Activated CD8-positive, alpha-beta T cell treated with anti-CD3 and anti-CD28 coated beads for 36 hours (primary cell): ENCODE measurements at regions of chr11 and their contacts with region 1.

Region 1: GRCh38 chr11:85699957-85700741 is 14.2 kb upstream of the CCDC89 start:
- DNase-seq: no peak
- ATAC-seq: peak; percentile 67
- H3K4me3 Mint-ChIP-seq: peak overlapping the region; percentile 36
- H3K27ac Mint-ChIP-seq: peak overlapping the region; percentile 81
- H3K4me1 Mint-ChIP-seq: peaks cover 28% of the 10 kb centered on the region
- H3K27me3 Mint-ChIP-seq: no peaks in the 10 kb centered on the region
- CTCF ChIP-seq: no peak

Region 2: GRCh38 chr11:85752890-85753581 is 52.9 kb after region 1 on chr11:
- CTCF ChIA-PET with region 1: no interaction called
- POLR2A ChIA-PET with region 1: interaction called, 3 read pairs
- intact Hi-C with region 1: loop called (anchors 5 kb)
- DNase-seq: peak; percentile 97
- ATAC-seq: peak; percentile 85
- H3K4me3 Mint-ChIP-seq: peak overlapping the region; percentile 66
- H3K27ac Mint-ChIP-seq: peak overlapping the region; percentile 97
- H3K4me1 Mint-ChIP-seq: peaks cover 92% of the 10 kb centered on the region
- H3K27me3 Mint-ChIP-seq: no peaks in the 10 kb centered on the region
- CTCF ChIP-seq: no peak

Region 3: DNA sequence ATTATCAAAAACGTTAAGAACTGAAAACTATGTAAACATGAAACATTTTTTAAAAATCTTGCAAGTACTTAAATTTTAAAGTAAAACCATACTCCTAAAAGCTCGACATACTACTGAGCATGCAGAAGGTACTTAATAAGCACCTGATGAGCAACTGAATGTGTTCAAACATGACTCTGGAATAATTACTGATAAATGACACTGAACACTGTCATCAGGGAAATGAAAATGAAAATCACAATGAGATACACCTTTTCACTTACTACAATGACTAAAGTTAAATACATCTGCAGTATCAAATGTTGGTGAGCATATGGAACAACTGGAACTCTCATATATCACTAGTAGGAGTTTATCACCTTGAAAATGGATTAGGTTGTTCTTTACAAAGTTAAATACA is 303.5 kb after region 1 on chr11:
- CTCF ChIA-PET with region 1: no interaction called
- POLR2A ChIA-PET with region 1: no interaction called
- intact Hi-C with region 1: no loop called
- DNase-seq: no peak
- ATAC-seq: no peak
- H3K4me3 Mint-ChIP-seq: no peak overlapping the region
- H3K27ac Mint-ChIP-seq: no peak overlapping the region
- H3K4me1 Mint-ChIP-seq: peaks cover 13% of the 10 kb centered on the region
- H3K27me3 Mint-ChIP-seq: no peaks in the 10 kb centered on the region
- CTCF ChIP-seq: no peak

Region 4: DNA sequence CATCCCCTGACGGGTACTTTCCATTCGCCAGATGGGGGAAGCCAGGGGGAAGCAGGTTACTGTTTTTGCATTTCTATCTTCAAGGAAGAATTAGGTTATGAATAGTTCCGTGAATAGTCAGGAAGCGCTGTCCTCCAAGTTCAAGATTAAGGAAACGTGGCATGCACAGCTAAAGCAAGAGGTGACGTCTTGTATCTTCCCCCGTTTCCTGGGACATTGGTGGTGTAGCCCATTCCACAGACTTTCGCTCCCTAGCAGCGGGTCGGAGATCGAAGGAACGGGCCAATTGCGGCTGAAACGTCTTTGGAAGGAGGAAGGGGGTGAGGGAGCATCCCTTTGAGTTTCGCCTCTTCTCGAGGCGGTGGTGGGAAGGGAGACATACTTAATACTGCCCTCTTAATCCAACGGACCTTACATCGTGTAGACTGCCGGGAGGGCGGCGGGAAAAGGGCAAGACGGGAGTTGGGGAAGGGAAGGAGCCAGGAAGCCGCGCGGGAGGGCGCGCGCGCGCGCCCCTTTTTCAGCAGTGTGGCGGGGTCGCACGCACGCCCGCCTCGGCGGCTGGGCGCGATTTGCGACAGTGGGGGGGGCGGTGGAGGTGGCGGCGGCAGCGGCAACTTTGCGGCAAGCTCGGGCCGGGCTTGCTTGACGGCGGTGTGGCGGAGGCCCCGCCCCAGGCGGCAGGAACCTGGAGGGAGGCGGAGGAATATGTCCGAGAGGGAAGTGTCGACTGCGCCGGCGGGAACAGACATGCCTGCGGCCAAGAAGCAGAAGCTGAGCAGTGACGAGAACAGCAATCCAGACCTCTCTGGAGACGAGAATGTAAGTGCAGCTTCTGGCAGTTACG is 544.6 kb after region 1 on chr11 and contains the start of gene EED:
- CTCF ChIA-PET with region 1: no interaction called
- POLR2A ChIA-PET with region 1: no interaction called
- intact Hi-C with region 1: no loop called
- DNase-seq: peak; percentile 95
- ATAC-seq: peak; percentile 87
- H3K4me3 Mint-ChIP-seq: no peak within 1 kb of the TSS
- H3K27ac Mint-ChIP-seq: no peak within 1 kb of the TSS
- H3K4me1 Mint-ChIP-seq: peaks cover 32% of the 10 kb centered on the region
- H3K27me3 Mint-ChIP-seq: no peaks in the 10 kb centered on the region
- CTCF ChIP-seq: no peak
- total RNA-seq, gene EED: 114 to 117 TPM